HEK293 (cell line): ENCODE measurements at regions of chr9 and their contacts with region 1.

Region 1: GRCh38 chr9:133485361-133486260 is 6.7 kb upstream of the SLC2A6 start:
- H3K4me3 ChIP-seq: no peak overlapping the region
- H3K27ac ChIP-seq: no peak overlapping the region
- H3K4me1 ChIP-seq: no peaks in the 10 kb centered on the region
- CTCF ChIP-seq: no peak

Region 2: DNA sequence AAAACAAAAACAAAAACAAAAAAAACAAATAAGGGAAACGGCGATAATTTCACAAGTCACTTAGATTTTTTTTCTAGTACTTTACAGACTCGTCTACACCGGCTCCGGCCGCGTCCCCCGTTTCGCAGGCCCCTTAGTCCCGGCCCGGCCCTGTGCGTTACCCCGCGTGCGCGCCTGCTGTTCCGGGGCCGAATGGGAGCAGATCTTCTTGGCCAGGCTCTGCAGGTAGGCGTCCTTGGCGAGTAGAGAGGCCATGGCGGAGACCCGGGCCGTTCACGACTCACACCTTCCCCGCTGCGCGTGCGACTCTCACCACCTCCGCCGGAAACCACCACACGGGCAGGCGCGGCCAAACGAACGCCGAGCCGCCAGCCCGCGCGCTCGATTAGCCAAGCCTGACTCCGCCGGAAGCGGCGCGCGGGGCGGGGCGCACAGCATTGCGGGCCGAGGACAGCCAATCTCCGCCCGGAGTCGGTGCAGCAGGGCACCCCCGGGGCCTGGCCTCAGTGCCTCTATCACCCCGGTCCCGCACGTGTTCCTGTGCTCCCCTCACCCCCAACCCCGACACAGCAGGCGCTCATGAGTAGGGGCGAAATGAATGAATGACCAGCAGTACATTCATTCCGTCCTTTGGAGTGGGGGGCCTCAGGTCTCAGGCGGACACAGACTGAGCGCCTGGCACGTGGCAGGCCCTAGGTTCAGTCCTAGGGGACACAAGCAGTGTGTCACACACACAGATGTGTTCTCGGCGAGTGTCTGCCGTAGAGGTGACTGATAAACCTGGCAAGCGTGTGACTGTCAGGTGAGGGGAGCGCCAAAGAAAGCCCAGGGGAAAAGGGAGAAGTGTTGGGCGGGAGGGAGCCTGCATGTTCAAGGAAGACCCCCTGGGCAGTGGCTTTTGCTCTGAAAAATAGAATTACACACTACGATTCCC is 149.5 kb before region 1 on chr9 and contains the start of gene SURF6:
- CTCF ChIA-PET with region 1: interaction called, 11 read pairs
- POLR2A ChIA-PET with region 1: no interaction called
- H3K4me3 ChIP-seq: peak within 1 kb of the TSS; percentile 74
- H3K27ac ChIP-seq: peak within 1 kb of the TSS; percentile 71
- H3K4me1 ChIP-seq: peaks cover 4% of the 10 kb centered on the region; the same call in 1 of the 2 replicates
- CTCF ChIP-seq: no peak

Region 3: DNA sequence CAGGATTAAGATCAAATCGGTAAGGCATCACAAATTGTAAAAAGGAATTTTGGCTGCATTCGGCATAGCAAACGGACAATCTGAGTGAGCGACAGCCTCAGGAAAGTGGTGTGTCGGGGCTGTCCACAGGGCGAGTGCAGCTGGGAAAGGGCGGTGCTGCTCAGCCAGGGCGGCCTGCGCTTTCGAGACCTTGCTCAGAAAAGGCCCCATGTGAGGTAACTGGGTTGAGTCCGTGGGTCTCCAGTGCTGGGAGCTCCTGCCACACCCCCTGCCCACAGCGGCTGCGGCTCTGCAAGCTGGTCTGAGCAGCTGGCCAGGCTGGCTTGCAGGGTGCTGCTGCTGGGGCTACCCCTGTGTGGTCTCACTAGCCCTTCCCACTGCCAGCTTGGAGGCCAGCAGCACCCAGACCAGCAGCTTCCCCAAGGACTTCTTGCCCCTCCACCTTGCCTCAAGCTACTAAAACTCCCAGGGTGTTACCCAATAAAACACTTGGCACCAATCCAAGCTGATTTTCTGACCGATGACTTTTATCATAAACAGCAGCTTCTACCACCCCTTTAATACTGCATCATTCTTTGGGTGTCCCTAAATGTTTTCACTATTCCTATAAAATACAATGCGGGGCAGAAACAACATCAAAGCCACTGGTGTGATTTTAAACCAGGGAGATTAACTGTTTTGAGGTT is 123.1 kb before region 1 on chr9:
- CTCF ChIA-PET with region 1: interaction called, 10 read pairs
- POLR2A ChIA-PET with region 1: interaction called, 3 read pairs
- H3K4me3 ChIP-seq: no peak overlapping the region
- H3K27ac ChIP-seq: peak overlapping the region; percentile 37; the same call in 1 of the 2 replicates
- H3K4me1 ChIP-seq: no peaks in the 10 kb centered on the region
- CTCF ChIP-seq: no peak

Region 4: GRCh38 chr9:133406480-133407307 is 78.9 kb before region 1 on chr9:
- CTCF ChIA-PET with region 1: interaction called, 24 read pairs
- POLR2A ChIA-PET with region 1: interaction called, 5 read pairs
- H3K4me3 ChIP-seq: no peak overlapping the region
- H3K27ac ChIP-seq: no peak overlapping the region
- H3K4me1 ChIP-seq: no peaks in the 10 kb centered on the region
- CTCF ChIP-seq: peak; percentile 92

Region 5: GRCh38 chr9:133417541-133418461 is 67.8 kb before region 1 on chr9 and contains the start of gene REXO4:
- CTCF ChIA-PET with region 1: interaction called, 12 read pairs
- POLR2A ChIA-PET with region 1: interaction called, 3 read pairs
- H3K4me3 ChIP-seq: peak within 1 kb of the TSS; percentile 63
- H3K27ac ChIP-seq: peak within 1 kb of the TSS; percentile 77
- H3K4me1 ChIP-seq: no peaks in the 10 kb centered on the region; the same call in 1 of the 2 replicates
- CTCF ChIP-seq: no peak; the same call in 1 of the 2 replicates

Region 6: GRCh38 chr9:133499132-133499891 is 13.7 kb after region 1 on chr9:
- CTCF ChIA-PET with region 1: interaction called, 36 read pairs
- POLR2A ChIA-PET with region 1: no interaction called
- H3K4me3 ChIP-seq: no peak overlapping the region
- H3K27ac ChIP-seq: no peak overlapping the region
- H3K4me1 ChIP-seq: no peaks in the 10 kb centered on the region
- CTCF ChIP-seq: no peak